Panc1 (cell line): ENCODE measurements at regions of chr19 and their contacts with region 1.

Region 1: GRCh38 chr19:1985559-1986356 is 29.8 kb downstream of the BTBD2 start:
- DNase-seq: no peak
- ATAC-seq: peak; percentile 43
- H3K4me3 ChIP-seq: no peak overlapping the region
- H3K27ac ChIP-seq: no peak overlapping the region
- H3K4me1 ChIP-seq: no peaks in the 10 kb centered on the region
- H3K27me3 ChIP-seq: no peaks in the 10 kb centered on the region
- CTCF ChIP-seq: no peak

Region 2: GRCh38 chr19:1490311-1491113 is 495.2 kb before region 1 on chr19 and contains the start of gene PCSK4:
- CTCF ChIA-PET with region 1: no interaction called
- POLR2A ChIA-PET with region 1: interaction called, 19 read pairs
- in situ Hi-C with region 1: no loop called
- intact Hi-C with region 1: no loop called
- DNase-seq: peak; percentile 91
- ATAC-seq: peak; percentile 93
- H3K4me3 ChIP-seq: peak within 1 kb of the TSS; percentile 55 to 65
- H3K27ac ChIP-seq: peak within 1 kb of the TSS; percentile 79
- H3K4me1 ChIP-seq: no peaks in the 10 kb centered on the region; the same call in 1 of the 2 replicates
- H3K27me3 ChIP-seq: no peaks in the 10 kb centered on the region
- CTCF ChIP-seq: no peak
- total RNA-seq, gene PCSK4: 9.9 TPM

Region 3: DNA sequence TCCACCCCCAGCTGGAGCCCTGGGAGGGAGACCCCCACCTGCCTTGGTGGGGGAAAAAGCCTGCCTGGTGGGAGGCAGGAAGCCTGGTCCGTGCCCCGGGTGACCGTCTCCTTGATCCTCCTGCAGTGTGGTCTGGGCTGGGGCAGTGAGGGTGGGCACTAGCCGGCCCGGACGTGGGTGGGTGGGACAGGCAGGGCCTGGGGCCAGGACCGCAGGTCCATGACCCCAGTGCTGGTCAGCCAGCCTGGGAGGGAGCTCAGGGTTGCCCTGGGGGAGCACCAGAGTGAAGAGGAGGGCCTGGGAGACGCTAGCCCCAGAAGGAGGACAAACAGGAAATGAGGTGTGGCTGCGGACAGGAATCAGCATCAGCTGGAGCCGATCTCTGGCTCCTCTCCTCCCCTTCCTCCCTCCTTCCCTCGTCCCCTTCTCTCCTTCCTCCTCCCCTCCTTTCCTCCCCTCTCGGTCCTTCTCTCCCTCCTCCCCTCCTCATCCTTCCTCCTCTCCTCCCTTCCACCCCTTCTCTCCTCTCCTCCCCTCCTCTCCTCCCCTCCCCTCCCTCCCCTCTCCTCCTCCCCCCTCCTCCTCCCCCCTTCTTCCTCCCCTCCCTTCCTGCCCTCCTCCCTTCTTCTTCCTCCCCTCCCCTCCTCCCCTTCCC is 70.6 kb after region 1 on chr19:
- CTCF ChIA-PET with region 1: no interaction called
- POLR2A ChIA-PET with region 1: interaction called, 10 read pairs
- in situ Hi-C with region 1: no loop called
- intact Hi-C with region 1: no loop called
- DNase-seq: no peak
- ATAC-seq: peak; percentile 6; the same call in 1 of the 2 replicates
- H3K4me3 ChIP-seq: no peak overlapping the region
- H3K27ac ChIP-seq: peak overlapping the region; percentile 83
- H3K4me1 ChIP-seq: peaks cover 63% of the 10 kb centered on the region
- H3K27me3 ChIP-seq: no peaks in the 10 kb centered on the region
- CTCF ChIP-seq: no peak